A673 (cell line): ENCODE measurements at regions of chr6 and their contacts with region 1.

Region 1: DNA sequence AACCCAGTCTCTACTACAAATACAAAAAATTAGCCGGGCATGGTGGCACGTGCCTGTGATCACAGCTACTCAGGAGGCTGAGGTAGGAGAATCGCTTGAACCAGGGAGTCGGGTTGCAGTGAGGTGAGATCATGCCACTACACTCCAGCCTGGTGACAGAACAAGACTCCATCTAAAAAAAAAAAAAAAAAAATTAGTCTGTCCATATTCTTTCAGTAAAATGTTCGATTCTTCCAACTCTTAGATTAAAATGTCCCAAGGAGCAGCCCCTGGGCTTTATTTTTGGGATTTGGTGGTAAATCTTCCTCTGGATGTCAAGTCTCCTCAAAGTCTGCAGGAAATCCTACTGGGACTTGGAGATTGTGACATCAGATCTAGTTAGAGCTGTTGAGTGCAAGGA is 101.0 kb upstream of the EEF1E1 start:
- DNase-seq: no peak
- H3K4me3 ChIP-seq: no peak overlapping the region
- H3K27ac ChIP-seq: no peak overlapping the region
- H3K4me1 ChIP-seq: no peaks in the 10 kb centered on the region
- H3K27me3 ChIP-seq: no peaks in the 10 kb centered on the region
- CTCF ChIP-seq: no peak

Region 2: GRCh38 chr6:8082954-8083858 is 120.1 kb before region 1 on chr6:
- CTCF ChIA-PET with region 1: no interaction called
- POLR2A ChIA-PET with region 1: interaction called, 12 read pairs
- intact Hi-C with region 1: no loop called
- DNase-seq: peak; percentile 82
- H3K4me3 ChIP-seq: no peak overlapping the region
- H3K27ac ChIP-seq: peak overlapping the region; percentile 77
- H3K4me1 ChIP-seq: peaks cover 50% of the 10 kb centered on the region
- H3K27me3 ChIP-seq: no peaks in the 10 kb centered on the region
- CTCF ChIP-seq: no peak